BJ (cell line): ENCODE measurements at regions of chr7 and their contacts with region 1.

Region 1: GRCh38 chr7:111527545-111527944 is 34.7 kb downstream of the IMMP2L start:
- DNase-seq: no peak
- H3K4me3 ChIP-seq: no peak overlapping the region
- H3K27me3 ChIP-seq: no peaks in the 10 kb centered on the region
- CTCF ChIP-seq: no peak

Region 2: DNA sequence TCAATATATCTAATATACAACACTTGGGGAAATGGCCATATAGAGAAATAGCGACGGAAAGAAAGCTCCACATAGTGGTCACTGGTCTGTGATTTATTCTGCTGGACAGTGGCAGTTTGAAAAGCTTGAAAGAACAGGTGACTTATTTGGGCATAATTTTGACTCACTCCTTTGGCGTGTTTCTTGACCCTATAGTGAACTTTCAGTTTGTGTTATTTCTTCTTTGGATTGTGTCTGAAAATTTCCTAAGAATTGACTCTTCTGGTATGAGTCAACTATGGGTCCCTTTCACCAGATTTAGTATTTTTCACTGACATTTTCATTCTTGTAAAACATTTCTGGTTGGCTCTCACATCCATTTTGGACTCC is 60.5 kb after region 1 on chr7:
- CTCF ChIA-PET with region 1: no interaction called
- POLR2A ChIA-PET with region 1: interaction called, 19 read pairs
- DNase-seq: no peak
- H3K4me3 ChIP-seq: no peak overlapping the region
- H3K27me3 ChIP-seq: no peaks in the 10 kb centered on the region; the same call in 1 of the 2 replicates
- CTCF ChIP-seq: no peak

Region 3: GRCh38 chr7:111600091-111600490 is 72.5 kb after region 1 on chr7:
- CTCF ChIA-PET with region 1: no interaction called
- POLR2A ChIA-PET with region 1: no interaction called
- DNase-seq: no peak
- H3K4me3 ChIP-seq: no peak overlapping the region
- H3K27me3 ChIP-seq: no peaks in the 10 kb centered on the region
- CTCF ChIP-seq: no peak